Activated CD4-positive, alpha-beta memory T cell treated with anti-CD3 and anti-CD28 coated beads for 36 hours (primary cell): ENCODE measurements at regions of chr3 and their contacts with region 1.

Region 1: GRCh38 chr3:120524171-120524923 is 71.8 kb upstream of the NDUFB4 start:
- DNase-seq: no peak
- H3K4me3 Mint-ChIP-seq: no peak overlapping the region
- H3K27ac Mint-ChIP-seq: peak overlapping the region; percentile 40
- H3K4me1 Mint-ChIP-seq: peaks cover 15% of the 10 kb centered on the region
- H3K27me3 Mint-ChIP-seq: peaks cover 6% of the 10 kb centered on the region

Region 2: DNA sequence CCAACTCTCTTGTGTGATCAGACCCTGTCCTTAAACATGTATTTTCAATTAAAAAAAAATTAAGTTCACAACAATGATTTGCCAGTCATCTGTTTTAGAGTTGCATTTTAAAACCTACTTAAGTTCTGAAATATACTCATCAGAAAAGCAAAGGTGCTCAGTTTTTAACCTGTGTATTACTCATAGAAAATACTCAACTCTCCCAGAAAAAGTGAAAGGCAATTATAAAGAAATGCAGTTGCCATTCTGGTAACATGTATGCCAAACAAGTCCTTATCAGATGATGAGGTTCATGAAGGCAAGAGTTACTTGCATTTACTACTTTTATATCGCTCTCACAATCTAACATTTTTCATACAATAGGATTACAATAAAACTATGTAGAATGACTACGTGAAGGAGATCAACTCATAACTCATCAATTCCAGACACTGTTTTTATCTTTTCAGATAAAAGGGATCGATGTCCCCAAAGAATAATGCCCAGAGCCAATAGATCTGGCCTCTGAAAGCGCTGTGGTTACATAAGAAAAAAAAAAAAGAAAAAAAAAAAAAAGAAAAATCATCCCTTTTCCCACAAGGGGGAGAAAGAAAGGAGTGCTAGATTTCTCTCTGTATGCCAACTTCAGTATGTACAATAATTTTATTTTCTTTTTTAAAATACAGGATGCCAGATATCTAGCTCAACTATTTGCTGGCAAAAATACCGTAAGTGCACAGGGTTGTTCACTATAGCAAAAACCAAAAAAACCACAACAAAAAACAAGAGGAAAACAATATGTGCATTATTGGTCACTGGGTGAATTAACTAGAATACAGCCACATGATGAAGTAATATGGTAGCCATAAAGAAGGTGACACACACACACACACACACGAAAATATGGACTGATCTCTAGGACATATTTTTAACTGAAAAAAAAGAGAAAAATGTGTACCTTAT is 605.1 kb before region 1 on chr3:
- CTCF ChIA-PET with region 1: no interaction called
- POLR2A ChIA-PET with region 1: no interaction called
- intact Hi-C with region 1: loop called (anchors 10 kb)
- DNase-seq: no peak
- H3K4me3 Mint-ChIP-seq: no peak overlapping the region
- H3K27ac Mint-ChIP-seq: no peak overlapping the region
- H3K4me1 Mint-ChIP-seq: peaks cover 20% of the 10 kb centered on the region
- H3K27me3 Mint-ChIP-seq: no peaks in the 10 kb centered on the region

Region 3: DNA sequence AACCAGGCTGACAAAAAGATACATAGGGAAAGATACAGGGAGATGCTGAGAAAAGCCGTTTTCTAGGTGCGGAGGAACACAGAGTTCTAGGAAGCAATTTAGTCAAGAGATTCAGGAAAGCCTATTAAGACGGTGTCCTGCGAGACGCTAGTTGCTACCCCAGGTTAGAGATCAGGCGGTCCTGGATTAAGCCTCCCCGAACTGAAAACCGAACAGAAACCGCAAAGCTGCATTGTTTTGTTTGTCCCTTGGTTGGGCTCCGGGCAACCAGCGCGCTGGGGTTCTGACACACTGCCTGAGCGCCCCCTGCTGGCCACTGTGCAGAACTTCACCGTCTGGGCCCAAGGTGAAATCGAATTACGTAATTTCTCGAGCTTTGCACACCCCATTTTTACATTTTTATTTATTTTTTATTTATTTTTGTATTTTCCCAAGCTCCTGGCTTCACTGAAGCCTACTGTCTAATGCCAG is 34.5 kb after region 1 on chr3:
- CTCF ChIA-PET with region 1: interaction called, 10 read pairs
- POLR2A ChIA-PET with region 1: no interaction called
- intact Hi-C with region 1: loop called (anchors 2 kb)
- DNase-seq: peak; percentile 90
- H3K4me3 Mint-ChIP-seq: peak overlapping the region; percentile 73
- H3K27ac Mint-ChIP-seq: peak overlapping the region; percentile 30
- H3K4me1 Mint-ChIP-seq: peaks cover 15% of the 10 kb centered on the region
- H3K27me3 Mint-ChIP-seq: peaks cover 2% of the 10 kb centered on the region